Panc1 (cell line): ENCODE measurements at regions of chr1 and their contacts with region 1.

Region 1: GRCh38 chr1:38834937-38835827 is 24.4 kb downstream of the RRAGC start:
- DNase-seq: peak; percentile 72
- ATAC-seq: peak; percentile 98
- H3K4me3 ChIP-seq: no peak overlapping the region
- H3K27ac ChIP-seq: no peak overlapping the region
- H3K4me1 ChIP-seq: no peaks in the 10 kb centered on the region
- H3K27me3 ChIP-seq: peaks cover 11% of the 10 kb centered on the region
- CTCF ChIP-seq: peak; percentile 80

Region 2: DNA sequence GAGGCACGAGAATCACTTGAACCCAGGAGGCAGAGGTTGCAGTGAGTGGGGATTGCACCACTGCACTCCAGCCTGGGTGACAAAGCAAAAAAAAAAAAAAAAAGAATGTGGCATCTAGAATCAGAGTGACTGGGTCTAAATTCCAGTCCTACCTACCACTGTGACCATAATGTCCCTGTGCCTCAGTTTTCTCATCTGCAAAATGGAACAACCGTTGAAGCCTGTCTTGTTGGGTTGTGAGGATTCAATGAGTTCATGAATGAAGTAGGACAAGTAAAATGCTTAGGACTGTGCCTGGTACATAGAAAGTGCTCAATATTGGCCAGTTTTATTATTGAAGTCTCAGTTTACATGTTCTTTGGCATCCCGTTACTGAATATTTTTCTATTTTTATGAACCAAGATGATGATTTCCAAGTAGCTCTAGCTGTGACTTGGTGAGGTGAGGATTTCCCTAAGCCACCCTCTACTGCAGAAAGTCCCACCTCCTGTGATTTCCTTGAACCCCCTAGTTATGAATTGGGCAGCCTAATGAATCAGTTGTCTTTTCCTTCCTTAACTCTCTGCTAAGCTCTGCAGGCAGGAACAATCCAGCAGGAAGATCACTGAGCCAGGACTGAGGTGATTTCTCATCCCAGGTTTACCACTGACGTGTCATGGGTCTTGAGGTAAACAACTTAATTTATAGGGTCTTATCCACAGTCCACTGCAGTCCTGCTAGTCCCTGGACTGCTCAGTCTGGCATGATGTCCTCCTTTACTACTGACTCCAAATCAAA is 1301.7 kb before region 1 on chr1:
- CTCF ChIA-PET with region 1: no interaction called
- POLR2A ChIA-PET with region 1: interaction called, 12 read pairs
- in situ Hi-C with region 1: no loop called
- intact Hi-C with region 1: no loop called
- DNase-seq: no peak
- ATAC-seq: no peak
- H3K4me3 ChIP-seq: no peak overlapping the region
- H3K27ac ChIP-seq: peak overlapping the region; percentile 34; the same call in 1 of the 2 replicates
- H3K4me1 ChIP-seq: peaks cover 5% of the 10 kb centered on the region
- H3K27me3 ChIP-seq: no peaks in the 10 kb centered on the region
- CTCF ChIP-seq: no peak

Region 3: GRCh38 chr1:38026592-38027200 is 808.5 kb before region 1 on chr1:
- CTCF ChIA-PET with region 1: interaction called, 4 read pairs
- POLR2A ChIA-PET with region 1: no interaction called
- in situ Hi-C with region 1: no loop called
- intact Hi-C with region 1: loop called (anchors 5 kb)
- DNase-seq: no peak
- ATAC-seq: peak; percentile 56
- H3K4me3 ChIP-seq: no peak overlapping the region
- H3K27ac ChIP-seq: no peak overlapping the region
- H3K4me1 ChIP-seq: peaks cover 20% of the 10 kb centered on the region
- H3K27me3 ChIP-seq: no peaks in the 10 kb centered on the region
- CTCF ChIP-seq: peak; percentile 89

Region 4: GRCh38 chr1:38848071-38848470 is 12.9 kb after region 1 on chr1:
- CTCF ChIA-PET with region 1: no interaction called
- POLR2A ChIA-PET with region 1: interaction called, 13 read pairs
- in situ Hi-C with region 1: no loop called
- intact Hi-C with region 1: no loop called
- DNase-seq: no peak
- ATAC-seq: no peak
- H3K4me3 ChIP-seq: no peak overlapping the region
- H3K27ac ChIP-seq: no peak overlapping the region
- H3K4me1 ChIP-seq: no peaks in the 10 kb centered on the region
- H3K27me3 ChIP-seq: no peaks in the 10 kb centered on the region
- CTCF ChIP-seq: no peak